Endothelial cell of umbilical vein (primary cell): ENCODE measurements at regions of chr19 and their contacts with region 1.

Region 1: GRCh38 chr19:42176990-42177685 is 40.3 kb downstream of the DEDD2 start:
- DNase-seq: peak; percentile 60
- H3K4me3 ChIP-seq: no peak overlapping the region
- H3K27ac ChIP-seq: no peak overlapping the region
- H3K4me1 ChIP-seq: peaks cover 8% of the 10 kb centered on the region
- H3K27me3 ChIP-seq: peaks cover 56 to 62% of the 10 kb centered on the region in 2 experiments
- CTCF ChIP-seq: peak; percentile 17 to 53
- POLR2A ChIP-seq: no peak

Region 2: GRCh38 chr19:42081584-42082203 is 95.4 kb before region 1 on chr19:
- CTCF ChIA-PET with region 1: interaction called, 3 read pairs
- POLR2A ChIA-PET with region 1: no interaction called
- dilution Hi-C with region 1: no loop called
- intact Hi-C with region 1: loop called (anchors 1 kb)
- DNase-seq: peak; percentile 64
- H3K4me3 ChIP-seq: no peak overlapping the region
- H3K27ac ChIP-seq: no peak overlapping the region
- H3K4me1 ChIP-seq: peaks cover 11% of the 10 kb centered on the region
- H3K27me3 ChIP-seq: no peaks in the 10 kb centered on the region
- CTCF ChIP-seq: peak; percentile 47 to 74
- POLR2A ChIP-seq: peak; percentile 30

Region 3: GRCh38 chr19:42108527-42109389 is 68.4 kb before region 1 on chr19:
- CTCF ChIA-PET with region 1: interaction called, 69 read pairs
- POLR2A ChIA-PET with region 1: no interaction called
- dilution Hi-C with region 1: no loop called
- intact Hi-C with region 1: no loop called
- DNase-seq: peak; percentile 90
- H3K4me3 ChIP-seq: no peak overlapping the region
- H3K27ac ChIP-seq: no peak overlapping the region
- H3K4me1 ChIP-seq: peaks cover 20% of the 10 kb centered on the region
- H3K27me3 ChIP-seq: peaks cover 3% of the 10 kb centered on the region in 2 experiments
- CTCF ChIP-seq: peak; percentile 99 to 100
- POLR2A ChIP-seq: no peak

Region 4: GRCh38 chr19:42113641-42114348 is 63.3 kb before region 1 on chr19:
- CTCF ChIA-PET with region 1: interaction called, 69 read pairs
- POLR2A ChIA-PET with region 1: no interaction called
- dilution Hi-C with region 1: no loop called
- intact Hi-C with region 1: no loop called
- DNase-seq: peak; percentile 97
- H3K4me3 ChIP-seq: no peak overlapping the region
- H3K27ac ChIP-seq: peak overlapping the region; percentile 88
- H3K4me1 ChIP-seq: peaks cover 29% of the 10 kb centered on the region
- H3K27me3 ChIP-seq: no peaks in the 10 kb centered on the region
- CTCF ChIP-seq: peak; percentile 26 to 47
- POLR2A ChIP-seq: peak; percentile 42

Region 5: GRCh38 chr19:42158926-42159325 is 18.2 kb before region 1 on chr19:
- CTCF ChIA-PET with region 1: interaction called, 19 read pairs
- POLR2A ChIA-PET with region 1: no interaction called
- dilution Hi-C with region 1: no loop called
- intact Hi-C with region 1: no loop called
- DNase-seq: no peak
- H3K4me3 ChIP-seq: no peak overlapping the region
- H3K27ac ChIP-seq: no peak overlapping the region
- H3K4me1 ChIP-seq: no peaks in the 10 kb centered on the region
- H3K27me3 ChIP-seq: peaks cover 12 to 21% of the 10 kb centered on the region in 2 experiments
- CTCF ChIP-seq: no peak
- POLR2A ChIP-seq: no peak

Region 6: GRCh38 chr19:42166316-42166715 is 10.8 kb before region 1 on chr19:
- CTCF ChIA-PET with region 1: interaction called, 19 read pairs
- POLR2A ChIA-PET with region 1: no interaction called
- dilution Hi-C with region 1: no loop called
- intact Hi-C with region 1: no loop called
- DNase-seq: no peak
- H3K4me3 ChIP-seq: no peak overlapping the region
- H3K27ac ChIP-seq: no peak overlapping the region
- H3K4me1 ChIP-seq: no peaks in the 10 kb centered on the region
- H3K27me3 ChIP-seq: peaks cover 2 to 9% of the 10 kb centered on the region in 2 experiments
- CTCF ChIP-seq: no peak
- POLR2A ChIP-seq: no peak